ENCODE measurements at regions of chr9 and their contacts with region 1.

Region 1: DNA sequence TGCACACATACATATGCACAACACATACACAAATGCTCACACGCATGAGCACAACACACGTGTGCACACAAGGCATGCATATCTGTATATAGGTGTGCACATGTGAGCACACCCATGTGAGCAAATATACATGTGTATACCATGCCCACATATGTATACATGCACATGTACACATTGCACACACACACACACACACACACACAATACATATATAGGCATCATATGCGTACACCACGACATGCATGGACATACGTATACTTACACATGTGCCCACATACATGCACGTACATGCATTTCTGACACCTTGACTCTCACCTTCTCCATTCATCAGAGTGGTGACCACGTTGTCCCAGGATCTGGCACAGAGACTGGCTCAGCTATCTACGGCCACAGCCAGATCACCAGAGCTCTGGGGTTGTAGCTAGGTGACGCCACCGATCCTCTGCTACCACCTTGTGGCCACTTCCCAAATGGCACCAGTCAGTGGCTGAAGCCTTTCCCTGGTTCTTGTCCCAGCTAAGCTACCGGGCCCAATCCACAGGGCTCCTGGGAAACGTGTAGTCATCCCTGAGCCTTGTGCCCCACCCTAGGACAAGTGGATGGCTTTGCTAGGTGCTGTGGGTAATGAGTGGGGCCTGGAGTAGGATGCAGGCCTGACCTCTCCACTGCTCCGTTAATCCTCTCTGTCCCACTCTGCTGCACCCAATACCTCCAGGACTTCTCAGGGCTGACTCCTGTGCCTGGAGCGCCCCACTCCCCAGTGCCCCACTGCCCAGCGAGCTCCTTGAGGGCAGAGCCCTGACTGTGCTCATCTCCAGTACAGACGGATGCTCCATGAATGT is 194.4 kb downstream of the RGS3 start:
- DNase-seq: peak; percentile 84
- ATAC-seq: peak; percentile 72

Region 2: GRCh38 chr9:113275157-113276131 is 382.5 kb before region 1 on chr9 and contains the starts of genes CDC26 and PRPF4:
- intact Hi-C with region 1: loop called (anchors 10 kb)
- DNase-seq: peak; percentile 98
- ATAC-seq: peak; percentile 97
- total RNA-seq, gene CDC26: 38.3 TPM
- total RNA-seq, gene PRPF4: 11.0 TPM

Region 3: DNA sequence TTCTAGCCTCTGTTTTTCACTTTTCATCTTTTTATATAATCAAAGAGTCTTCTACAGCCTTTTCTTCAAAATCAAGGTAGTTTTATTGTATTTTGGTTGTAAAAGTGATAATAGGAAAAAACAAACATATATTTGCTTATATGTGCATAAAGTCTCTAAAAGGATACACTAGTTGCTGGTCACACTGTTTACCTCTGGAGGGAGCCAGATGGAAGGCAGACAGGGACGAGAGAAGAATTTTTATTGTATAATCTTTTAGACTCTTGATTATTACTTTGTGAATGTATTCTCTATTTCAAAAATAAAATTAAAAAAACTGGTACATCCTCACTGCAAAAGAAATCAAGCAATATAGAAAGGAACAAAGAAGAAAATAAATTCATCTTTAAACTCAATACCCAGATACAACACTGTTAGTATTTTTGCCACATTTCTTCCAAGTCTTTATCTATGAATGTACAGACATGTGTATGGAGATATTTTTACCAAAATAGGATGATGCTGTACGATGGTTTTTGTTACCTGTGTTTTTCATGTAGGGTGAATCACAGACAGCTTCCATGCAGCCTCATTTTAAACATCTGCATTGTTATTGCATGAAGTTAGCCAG is 348.6 kb before region 1 on chr9:
- intact Hi-C with region 1: loop called (anchors 2 kb)
- DNase-seq: no peak
- ATAC-seq: no peak

Region 4: DNA sequence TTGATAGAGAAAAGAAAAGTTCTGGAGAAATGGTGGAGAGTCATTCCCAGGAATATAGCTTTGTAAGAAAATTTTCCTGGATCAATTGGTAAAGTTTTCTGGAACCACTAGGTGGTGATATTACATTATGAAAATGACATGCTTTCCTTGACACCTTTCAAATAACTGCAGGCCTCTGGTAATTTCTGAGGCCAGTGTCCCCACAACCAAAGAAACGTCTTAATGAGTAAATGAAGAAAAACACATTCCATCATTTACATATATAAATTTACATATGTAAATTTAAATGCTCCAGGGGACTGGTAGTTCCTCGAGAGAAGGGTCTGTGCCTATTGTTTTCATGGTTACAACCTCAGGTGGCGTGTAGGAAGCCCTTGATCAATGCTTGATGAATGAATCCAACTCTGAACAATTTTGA is 211.6 kb before region 1 on chr9:
- intact Hi-C with region 1: loop called (anchors 2 kb)
- DNase-seq: no peak
- ATAC-seq: peak; percentile 34

Region 5: GRCh38 chr9:113620377-113621161 is 37.4 kb before region 1 on chr9:
- intact Hi-C with region 1: loop called (anchors 2 kb)
- DNase-seq: no peak
- ATAC-seq: peak; percentile 50

Measured in Right ventricle myocardium inferior (tissue), 1 donor.